ENCODE measurements at regions of chr7 and their contacts with region 1.

Region 1: GRCh38 chr7:129271500-129272355 is 46.9 kb downstream of the AHCYL2 start:
- DNase-seq: peak in 3 of 6 donors; percentile 49 to 70 (median 63)
- ATAC-seq: peak; percentile 93 to 99 (median 99)
- H3K4me3 ChIP-seq: no peak overlapping the region
- H3K27ac ChIP-seq: no peak overlapping the region
- H3K4me1 ChIP-seq: no peaks in the 10 kb centered on the region
- H3K27me3 ChIP-seq: no peaks in the 10 kb centered on the region
- CTCF ChIP-seq: peak; percentile 35 to 61 (median 53)

Region 2: GRCh38 chr7:129218514-129219062 is 53.1 kb before region 1 on chr7:
- intact Hi-C with region 1: loop called in 2 of 3 experiments (anchors 5 to 10 kb)
- DNase-seq: peak; percentile 70 to 87 (median 81)
- ATAC-seq: peak; percentile 76 to 99 (median 96)
- H3K4me3 ChIP-seq: no peak overlapping the region
- H3K27ac ChIP-seq: no peak overlapping the region
- H3K4me1 ChIP-seq: no peaks in the 10 kb centered on the region
- H3K27me3 ChIP-seq: no peaks in the 10 kb centered on the region
- CTCF ChIP-seq: peak; percentile 79 to 98 (median 85)

Region 3: GRCh38 chr7:129859183-129859582 is 587.5 kb after region 1 on chr7:
- intact Hi-C with region 1: no loop called
- DNase-seq: no peak
- ATAC-seq: peak in 2 of 4 donors; percentile 8 to 16
- H3K4me3 ChIP-seq: no peak overlapping the region
- H3K27ac ChIP-seq: peak overlapping the region in 2 of 4 donors; percentile 29 to 37
- H3K4me1 ChIP-seq: peaks cover 48 to 84% (median 80%) of the 10 kb centered on the region in 3 donors
- H3K27me3 ChIP-seq: no peaks in the 10 kb centered on the region
- CTCF ChIP-seq: no peak

Measured in pancreas (tissue), 10 donors.